ENCODE measurements at regions of chr9 and their contacts with region 1.

Region 1: GRCh38 chr9:75609401-75609800 is 281.1 kb upstream of the PCSK5 start:
- DNase-seq: no peak
- H3K4me3 ChIP-seq: no peak overlapping the region
- H3K27ac ChIP-seq: no peak overlapping the region
- H3K4me1 ChIP-seq: no peaks in the 10 kb centered on the region
- H3K27me3 ChIP-seq: no peaks in the 10 kb centered on the region
- CTCF ChIP-seq: no peak

Region 2: DNA sequence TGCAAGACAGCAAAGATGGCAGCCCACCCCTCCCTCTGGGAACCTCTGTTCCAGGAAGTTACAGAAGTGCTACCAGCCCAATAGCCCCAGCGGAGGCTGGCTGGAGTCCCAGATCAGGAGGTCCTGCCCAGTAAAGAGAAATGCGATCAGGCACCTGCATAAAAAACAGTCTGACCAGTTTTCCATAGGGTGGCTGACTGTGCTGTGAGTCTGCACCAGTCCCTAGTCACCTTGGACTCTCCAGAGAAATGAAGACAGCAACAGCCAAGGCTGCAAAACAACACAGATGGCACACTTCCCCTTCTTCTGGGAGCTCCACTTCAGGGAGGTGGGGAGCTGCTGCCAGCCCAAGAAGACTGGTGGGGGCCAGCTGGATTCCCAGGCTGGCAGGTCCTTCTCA is 15.6 kb after region 1 on chr9:
- CTCF ChIA-PET with region 1: no interaction called
- POLR2A ChIA-PET with region 1: no interaction called
- intact Hi-C with region 1: loop called (anchors 1 kb)
- DNase-seq: peak in 1 of 2 experiments; percentile 17
- H3K4me3 ChIP-seq: no peak overlapping the region
- H3K27ac ChIP-seq: no peak overlapping the region
- H3K4me1 ChIP-seq: no peaks in the 10 kb centered on the region
- H3K27me3 ChIP-seq: no peaks in the 10 kb centered on the region
- CTCF ChIP-seq: no peak

Measured in PC-9 (cell line).